Left colon (tissue), 2 donors: ENCODE measurements at regions of chr16 and their contacts with region 1.

Region 1: GRCh38 chr16:15592324-15592723 is 50.6 kb downstream of the MARF1 start:
- DNase-seq: peak; percentile 38 to 42
- ATAC-seq: peak; percentile 25

Region 2: DNA sequence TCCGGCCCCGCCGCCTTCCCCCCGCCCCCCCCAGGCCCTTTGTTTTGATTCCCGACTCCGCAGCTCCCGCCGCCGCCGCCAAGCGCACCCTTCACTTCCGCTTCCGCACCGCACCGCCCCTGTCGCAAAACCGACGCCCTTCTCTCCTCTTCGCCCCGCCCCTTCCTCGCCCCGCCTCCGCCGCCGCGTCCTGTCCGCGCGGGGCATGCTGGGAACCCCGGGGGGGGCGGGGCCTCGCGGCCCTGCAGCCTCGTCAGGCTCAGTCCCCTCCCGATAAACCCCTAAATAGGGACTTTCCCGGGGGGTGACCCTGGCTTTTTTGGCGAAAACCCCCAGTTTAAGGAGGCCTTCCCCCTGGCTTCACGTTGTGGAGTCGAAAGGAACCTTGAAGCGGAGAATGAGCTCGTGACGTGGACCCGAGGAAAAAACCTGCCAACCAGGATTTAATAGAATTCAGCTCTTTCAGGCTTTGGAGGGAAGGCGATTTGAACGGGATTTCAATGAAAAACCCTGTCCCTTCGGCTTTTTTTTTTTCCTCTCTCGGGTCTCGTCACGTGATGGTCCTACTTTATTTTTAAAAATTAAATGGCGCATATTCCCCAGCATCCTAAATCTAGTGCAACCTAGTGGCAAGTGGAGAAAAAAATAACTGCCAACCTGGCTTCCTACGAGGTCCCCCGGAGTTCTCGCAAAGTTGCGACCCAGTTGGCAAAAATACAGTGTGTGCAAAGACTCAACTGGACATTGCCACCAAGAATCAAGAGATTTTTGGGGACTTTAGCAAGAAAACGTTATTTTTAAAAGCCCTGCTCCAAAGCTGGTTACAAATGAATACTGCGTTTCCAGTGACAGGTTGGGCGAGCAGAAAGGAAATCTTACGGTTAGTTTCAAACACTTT is 51.0 kb after region 1 on chr16 and contains the start of gene MARF1:
- intact Hi-C with region 1: loop called in 1 of 2 experiments (anchors 10 kb)
- DNase-seq: peak; percentile 98 to 100
- ATAC-seq: peak; percentile 92
- total RNA-seq, gene MARF1: 54.5 to 85.9 TPM